Activated naive CD4-positive, alpha-beta T cell treated with anti-CD3 and anti-CD28 coated beads, Interleukin-2, amount 10 ng/mL, durations not matched to agents 7 days and 5 days (primary cell): ENCODE measurements at regions of chr10 and their contacts with region 1.

Region 1: DNA sequence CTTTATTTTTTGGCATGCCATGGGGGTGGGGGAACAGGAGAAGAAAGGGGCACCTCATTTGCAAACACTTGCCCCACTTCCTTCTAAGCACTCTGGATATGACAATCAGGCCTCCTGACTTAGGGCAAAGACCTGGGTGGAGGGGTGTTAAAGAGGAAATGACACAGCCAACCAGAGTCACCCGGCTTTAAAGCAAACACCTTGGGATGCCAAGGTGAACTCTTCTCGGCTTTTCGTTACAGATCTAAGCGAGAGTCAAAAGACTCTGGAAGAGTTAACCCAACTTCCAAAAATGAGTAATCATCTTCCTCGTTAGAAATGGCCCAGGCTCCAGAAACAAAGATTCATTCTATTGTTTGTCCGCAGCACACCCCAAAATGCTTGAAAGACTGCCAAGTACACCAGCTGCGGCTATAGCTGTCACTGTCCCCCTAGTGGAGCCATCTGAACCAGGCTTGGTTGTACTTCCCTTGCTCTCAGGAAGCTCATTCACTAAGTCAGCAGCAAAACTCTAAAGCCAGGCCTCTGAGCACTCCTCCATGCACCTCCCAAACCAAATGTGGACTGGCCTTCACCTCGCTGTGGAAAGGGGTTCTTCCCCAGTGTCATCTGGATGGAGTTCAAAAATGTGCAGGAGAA is 24.8 kb downstream of the FAM53B start:
- DNase-seq: peak; percentile 84
- H3K4me3 Mint-ChIP-seq: peak overlapping the region; percentile 52
- H3K27ac Mint-ChIP-seq: peak overlapping the region; percentile 99
- H3K4me1 Mint-ChIP-seq: peaks cover 96% of the 10 kb centered on the region
- H3K27me3 Mint-ChIP-seq: no peaks in the 10 kb centered on the region

Region 2: DNA sequence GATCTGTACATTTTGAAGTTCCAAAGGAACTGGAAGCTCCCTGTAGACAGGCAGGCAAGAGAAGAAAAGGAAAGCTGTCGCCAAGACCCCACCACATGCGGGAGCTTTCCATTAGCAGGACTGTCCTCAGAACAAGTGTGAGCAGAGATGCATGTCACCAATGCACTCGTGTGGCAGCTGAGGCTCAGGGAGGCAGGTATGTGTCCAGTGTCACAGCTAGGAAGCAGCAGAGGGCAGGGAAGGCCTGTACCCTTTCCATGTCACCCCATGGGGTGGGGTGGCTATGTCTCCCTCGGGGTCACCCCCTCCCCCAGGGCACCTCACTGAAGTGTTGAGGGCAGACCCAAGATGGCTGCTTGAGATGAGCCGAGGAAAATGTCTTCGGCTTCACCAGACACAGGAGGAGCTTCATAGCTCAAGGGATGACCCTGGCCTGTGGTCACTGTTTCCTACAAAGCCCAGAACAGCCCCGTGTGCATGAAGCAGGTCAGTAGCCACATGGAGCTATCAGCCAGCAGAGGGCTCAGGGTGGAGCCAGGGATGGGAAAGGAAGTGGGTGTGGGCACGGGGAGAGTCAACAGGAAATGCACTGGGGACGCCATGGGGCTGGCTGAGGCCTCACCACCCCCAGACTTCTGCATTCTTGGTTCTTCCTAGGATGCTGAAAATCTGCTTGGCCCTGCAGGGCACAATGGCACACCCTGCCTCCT is 71.8 kb before region 1 on chr10:
- CTCF ChIA-PET with region 1: interaction called, 16 read pairs
- DNase-seq: peak; percentile 88
- H3K4me3 Mint-ChIP-seq: peak overlapping the region; percentile 70
- H3K27ac Mint-ChIP-seq: peak overlapping the region; percentile 99
- H3K4me1 Mint-ChIP-seq: peaks cover 90% of the 10 kb centered on the region
- H3K27me3 Mint-ChIP-seq: no peaks in the 10 kb centered on the region

Region 3: DNA sequence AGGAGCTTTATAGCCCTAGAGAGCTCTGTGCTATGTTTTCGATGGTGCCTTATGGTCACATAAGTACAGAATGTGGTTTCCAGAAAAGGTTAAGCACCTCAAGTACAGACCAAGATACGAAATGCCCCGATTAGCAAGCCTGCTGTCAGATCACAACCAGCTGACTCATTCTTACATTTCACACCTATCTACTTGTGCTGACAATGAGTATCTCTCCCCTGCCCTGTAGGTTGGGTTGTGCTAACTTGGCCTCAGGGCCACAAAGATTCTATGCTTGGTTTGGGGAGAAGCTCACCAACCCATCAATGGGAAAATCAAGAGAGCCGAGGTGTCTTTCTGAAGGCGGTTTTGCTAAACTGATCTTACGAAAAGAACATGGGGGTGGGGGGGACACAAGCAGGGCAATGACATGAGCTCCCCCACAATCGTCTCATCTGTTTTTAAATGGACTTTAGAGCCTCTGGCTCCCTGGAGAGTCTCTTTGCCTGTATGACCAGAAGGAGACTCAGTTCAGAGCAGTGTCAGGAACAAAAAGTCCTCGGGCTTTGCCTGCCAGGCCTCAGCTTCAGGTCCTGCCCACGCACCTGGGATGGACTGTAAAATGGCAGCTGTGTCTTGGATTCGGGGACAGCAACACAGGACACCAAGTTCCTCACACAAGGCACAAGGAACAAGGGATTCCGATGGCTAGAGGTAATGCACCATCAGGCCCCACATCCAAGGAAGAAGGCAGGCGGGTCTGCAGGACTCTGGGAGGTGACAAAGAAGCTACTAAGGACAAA is 30.3 kb before region 1 on chr10:
- CTCF ChIA-PET with region 1: interaction called, 24 read pairs
- DNase-seq: peak; percentile 48
- H3K4me3 Mint-ChIP-seq: no peak overlapping the region
- H3K27ac Mint-ChIP-seq: peak overlapping the region; percentile 84
- H3K4me1 Mint-ChIP-seq: peaks cover 78% of the 10 kb centered on the region
- H3K27me3 Mint-ChIP-seq: no peaks in the 10 kb centered on the region

Region 4: DNA sequence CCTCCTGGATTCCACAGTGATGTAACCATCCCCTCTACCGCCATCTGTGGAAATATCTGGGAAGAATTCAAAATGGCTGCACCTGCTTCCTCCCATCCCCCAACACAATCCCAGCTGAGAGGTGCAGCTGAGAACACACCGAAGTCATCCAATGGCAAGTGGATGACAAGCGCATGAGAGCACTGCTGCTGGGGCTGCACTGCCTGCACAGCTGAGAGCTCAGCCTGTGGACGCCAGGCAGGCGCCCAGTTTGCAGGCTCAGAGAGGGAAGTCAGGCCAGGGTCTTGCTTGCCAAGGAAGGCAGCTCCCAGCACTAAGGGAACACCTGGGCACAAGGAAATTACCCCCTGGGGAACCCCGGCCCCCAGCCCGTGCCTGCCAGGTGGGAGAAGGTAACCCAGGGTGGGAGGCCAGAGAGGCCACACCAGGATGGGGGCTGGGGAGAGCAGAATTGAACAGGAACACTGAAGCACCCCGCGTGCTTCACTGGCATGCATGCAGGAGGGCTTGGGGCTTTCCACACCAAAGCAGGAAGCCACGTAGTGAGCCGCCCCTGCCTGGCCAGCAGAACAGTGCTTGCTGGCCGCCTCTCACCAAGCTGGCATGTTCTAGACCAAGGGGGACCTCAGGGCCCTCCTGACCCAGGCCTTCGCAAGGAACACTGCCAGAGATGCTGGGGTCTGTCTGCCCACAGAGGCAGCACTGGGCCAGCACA is 21.3 kb before region 1 on chr10:
- CTCF ChIA-PET with region 1: interaction called, 20 read pairs
- DNase-seq: peak; percentile 62
- H3K4me3 Mint-ChIP-seq: no peak overlapping the region
- H3K27ac Mint-ChIP-seq: peak overlapping the region; percentile 96
- H3K4me1 Mint-ChIP-seq: peaks cover 100% of the 10 kb centered on the region
- H3K27me3 Mint-ChIP-seq: no peaks in the 10 kb centered on the region

Region 5: GRCh38 chr10:124703778-124704427 is 15.4 kb before region 1 on chr10:
- CTCF ChIA-PET with region 1: interaction called, 25 read pairs
- DNase-seq: no peak
- H3K4me3 Mint-ChIP-seq: no peak overlapping the region
- H3K27ac Mint-ChIP-seq: peak overlapping the region; percentile 95
- H3K4me1 Mint-ChIP-seq: peaks cover 99% of the 10 kb centered on the region
- H3K27me3 Mint-ChIP-seq: no peaks in the 10 kb centered on the region

Region 6: GRCh38 chr10:124732931-124733570 is 13.7 kb after region 1 on chr10:
- CTCF ChIA-PET with region 1: interaction called, 34 read pairs
- DNase-seq: peak; percentile 57
- H3K4me3 Mint-ChIP-seq: peak overlapping the region; percentile 21
- H3K27ac Mint-ChIP-seq: peak overlapping the region; percentile 86
- H3K4me1 Mint-ChIP-seq: peaks cover 90% of the 10 kb centered on the region
- H3K27me3 Mint-ChIP-seq: no peaks in the 10 kb centered on the region